ENCODE measurements at regions of chr6 and their contacts with region 1.

Region 1: GRCh38 chr6:32868257-32868788 is 14.3 kb downstream of the PSMB9 start:
- DNase-seq: peak; percentile 70
- ATAC-seq: peak; percentile 66
- H3K4me3 Mint-ChIP-seq: no peak overlapping the region
- H3K27ac Mint-ChIP-seq: no peak overlapping the region
- H3K4me1 Mint-ChIP-seq: peaks cover 35% of the 10 kb centered on the region
- H3K27me3 Mint-ChIP-seq: no peaks in the 10 kb centered on the region
- CTCF ChIP-seq: peak; percentile 42

Region 2: GRCh38 chr6:31862344-31863227 is 1005.7 kb before region 1 on chr6 and contains the start of gene NEU1:
- CTCF ChIA-PET with region 1: no interaction called
- POLR2A ChIA-PET with region 1: no interaction called
- intact Hi-C with region 1: no loop called
- DNase-seq: peak; percentile 93
- ATAC-seq: peak; percentile 91
- H3K4me3 Mint-ChIP-seq: peak within 1 kb of the TSS; percentile 95
- H3K27ac Mint-ChIP-seq: peak within 1 kb of the TSS; percentile 93
- H3K4me1 Mint-ChIP-seq: peaks cover 21% of the 10 kb centered on the region
- H3K27me3 Mint-ChIP-seq: no peaks in the 10 kb centered on the region
- CTCF ChIP-seq: no peak
- total RNA-seq, gene NEU1: 18.3 and 19.2 TPM in 2 replicates

Region 3: DNA sequence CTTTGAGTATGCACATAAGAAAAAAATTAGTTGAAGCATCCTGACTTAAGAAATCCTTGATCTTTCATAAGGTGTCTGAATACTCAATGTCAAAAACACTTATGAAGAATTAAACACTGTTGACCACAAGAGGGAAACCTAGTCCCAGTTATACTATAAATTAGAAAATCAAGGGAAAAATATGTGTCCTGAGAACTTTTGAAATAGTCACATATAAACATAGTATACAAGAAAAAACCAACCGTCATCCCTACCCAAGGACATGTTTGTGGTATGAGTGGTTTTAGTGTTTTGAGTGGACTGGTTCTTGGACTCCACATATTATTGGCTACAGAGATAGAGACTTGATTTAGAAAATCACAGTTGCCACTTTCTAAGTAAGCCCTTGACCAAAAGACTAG is 436.3 kb before region 1 on chr6:
- CTCF ChIA-PET with region 1: interaction called, 6 read pairs
- POLR2A ChIA-PET with region 1: interaction called, 3 read pairs
- intact Hi-C with region 1: loop called (anchors 5 kb)
- DNase-seq: no peak
- ATAC-seq: peak; percentile 43
- H3K4me3 Mint-ChIP-seq: no peak overlapping the region
- H3K27ac Mint-ChIP-seq: peak overlapping the region; percentile 24
- H3K4me1 Mint-ChIP-seq: peaks cover 33% of the 10 kb centered on the region
- H3K27me3 Mint-ChIP-seq: no peaks in the 10 kb centered on the region
- CTCF ChIP-seq: peak; percentile 65

Region 4: DNA sequence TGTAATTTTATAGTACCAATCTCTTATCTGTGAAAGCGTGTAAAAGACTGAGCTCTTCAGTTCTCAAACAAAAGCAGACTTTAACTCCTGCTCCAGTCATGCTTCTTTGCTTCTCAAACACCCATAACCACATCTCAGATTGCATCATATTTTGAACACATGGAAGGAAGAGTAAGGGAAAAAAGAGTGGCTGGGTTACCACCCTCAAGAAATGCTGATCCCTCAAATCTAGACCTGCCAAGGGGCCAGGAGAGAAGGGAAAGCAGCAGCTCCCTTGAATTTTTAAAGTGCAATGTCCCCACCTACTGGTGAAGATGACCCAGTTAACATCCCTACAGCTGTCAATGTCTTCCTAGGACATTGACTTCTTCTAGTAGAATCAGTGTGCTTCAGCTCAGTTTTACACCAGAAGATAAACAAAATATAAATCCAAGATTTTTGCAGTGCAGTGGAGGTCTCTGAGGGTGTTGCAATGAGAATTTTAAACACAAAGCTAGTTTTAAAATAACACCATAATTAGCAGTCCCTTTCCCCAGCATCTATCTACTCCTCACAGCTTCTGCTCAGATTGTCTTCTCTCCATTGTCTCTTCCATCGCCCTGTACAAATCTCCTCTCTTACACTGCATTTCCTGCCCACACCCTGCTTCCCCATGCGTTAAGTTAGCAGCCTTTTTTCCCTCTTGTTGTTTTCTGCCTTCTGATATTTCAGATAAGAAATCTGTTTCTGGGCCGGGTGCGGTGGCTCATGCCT is 82.4 kb before region 1 on chr6:
- CTCF ChIA-PET with region 1: interaction called, 38 read pairs
- POLR2A ChIA-PET with region 1: interaction called, 3 read pairs
- intact Hi-C with region 1: no loop called
- DNase-seq: no peak
- ATAC-seq: peak; percentile 88
- H3K4me3 Mint-ChIP-seq: no peak overlapping the region
- H3K27ac Mint-ChIP-seq: no peak overlapping the region
- H3K4me1 Mint-ChIP-seq: peaks cover 2% of the 10 kb centered on the region
- H3K27me3 Mint-ChIP-seq: no peaks in the 10 kb centered on the region
- CTCF ChIP-seq: no peak

Region 5: DNA sequence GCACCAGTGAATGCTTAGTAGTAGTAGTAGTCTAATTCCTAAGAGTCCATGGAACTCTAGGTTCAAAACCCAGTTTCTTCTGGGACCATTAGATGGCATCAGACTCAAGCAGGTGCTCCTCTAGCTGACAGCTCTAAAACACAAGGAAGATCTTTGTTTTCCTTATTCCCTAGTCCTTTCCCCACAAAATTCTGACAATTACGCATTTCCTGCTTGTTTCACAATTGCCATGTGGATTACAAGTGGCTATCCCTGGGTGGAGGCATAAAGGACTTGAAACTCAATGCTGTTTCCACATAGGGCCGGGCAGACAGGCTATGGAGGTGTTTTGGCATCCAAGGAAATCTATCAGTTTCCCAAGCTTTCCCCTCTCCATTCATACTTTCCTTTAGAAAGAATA is 42.4 kb before region 1 on chr6:
- CTCF ChIA-PET with region 1: interaction called, 24 read pairs
- POLR2A ChIA-PET with region 1: interaction called, 5 read pairs
- intact Hi-C with region 1: no loop called
- DNase-seq: no peak
- ATAC-seq: no peak
- H3K4me3 Mint-ChIP-seq: no peak overlapping the region
- H3K27ac Mint-ChIP-seq: no peak overlapping the region
- H3K4me1 Mint-ChIP-seq: peaks cover 17% of the 10 kb centered on the region
- H3K27me3 Mint-ChIP-seq: no peaks in the 10 kb centered on the region
- CTCF ChIP-seq: no peak

Region 6: GRCh38 chr6:32853541-32854375 is 14.6 kb before region 1 on chr6 and contains the starts of genes PSMB9 and TAP1:
- CTCF ChIA-PET with region 1: interaction called, 81 read pairs
- POLR2A ChIA-PET with region 1: interaction called, 98 read pairs
- intact Hi-C with region 1: loop called (anchors 1 kb)
- DNase-seq: peak; percentile 91
- ATAC-seq: peak; percentile 80
- H3K4me3 Mint-ChIP-seq: peak within 1 kb of the TSS; percentile 99
- H3K27ac Mint-ChIP-seq: peak within 1 kb of the TSS; percentile 98
- H3K4me1 Mint-ChIP-seq: peaks cover 77% of the 10 kb centered on the region
- H3K27me3 Mint-ChIP-seq: no peaks in the 10 kb centered on the region
- CTCF ChIP-seq: peak; percentile 20
- total RNA-seq, gene PSMB9: 198 and 223 TPM in 2 replicates
- total RNA-seq, gene TAP1: 148 and 151 TPM in 2 replicates

Region 7: DNA sequence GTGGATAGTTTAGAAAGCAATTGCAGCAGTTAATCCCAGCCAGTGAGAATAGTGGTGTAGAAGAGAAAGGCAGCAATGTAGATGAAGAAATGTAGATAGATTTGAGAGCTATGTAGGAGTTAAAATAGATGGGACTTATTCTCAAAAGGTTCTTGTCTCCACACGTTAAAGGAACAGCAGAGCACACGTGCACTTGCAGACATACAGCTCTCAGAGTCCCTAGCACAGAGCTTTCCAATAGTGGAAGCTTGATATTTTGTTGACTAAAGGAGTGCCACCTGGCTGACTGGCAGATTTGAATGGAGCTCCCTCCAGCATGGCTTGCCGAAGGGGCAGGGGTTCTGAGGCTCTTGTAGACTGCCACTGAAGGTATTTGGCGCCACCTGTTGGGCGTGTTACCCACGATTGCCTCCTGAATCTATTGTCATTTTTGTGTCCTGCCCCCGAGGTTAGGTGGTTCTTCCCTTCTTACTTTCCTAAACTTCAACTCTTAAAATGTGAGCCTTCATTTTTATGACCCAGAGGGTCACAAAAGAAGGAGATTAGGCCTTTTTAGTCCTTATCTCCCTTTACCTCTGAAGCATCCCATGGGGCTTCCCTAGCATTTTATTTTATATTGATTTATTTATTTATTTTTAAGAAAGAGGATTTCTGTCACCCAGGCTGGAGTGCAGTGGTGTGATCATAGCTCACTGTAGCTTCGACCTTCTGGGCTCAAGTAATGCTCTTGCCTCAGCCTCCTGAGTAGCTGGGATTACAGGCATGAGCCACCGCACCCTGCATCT is 116.5 kb after region 1 on chr6:
- CTCF ChIA-PET with region 1: interaction called, 39 read pairs
- POLR2A ChIA-PET with region 1: interaction called, 6 read pairs
- intact Hi-C with region 1: no loop called
- DNase-seq: peak; percentile 74
- ATAC-seq: peak; percentile 90
- H3K4me3 Mint-ChIP-seq: no peak overlapping the region
- H3K27ac Mint-ChIP-seq: peak overlapping the region; percentile 73
- H3K4me1 Mint-ChIP-seq: peaks cover 32% of the 10 kb centered on the region
- H3K27me3 Mint-ChIP-seq: no peaks in the 10 kb centered on the region
- CTCF ChIP-seq: no peak

Region 8: GRCh38 chr6:33112148-33112547 is 243.8 kb after region 1 on chr6:
- CTCF ChIA-PET with region 1: no interaction called
- POLR2A ChIA-PET with region 1: no interaction called
- intact Hi-C with region 1: no loop called
- DNase-seq: no peak
- ATAC-seq: peak; percentile 94
- H3K4me3 Mint-ChIP-seq: peak overlapping the region; percentile 76
- H3K27ac Mint-ChIP-seq: peak overlapping the region; percentile 73
- H3K4me1 Mint-ChIP-seq: peaks cover 53% of the 10 kb centered on the region
- H3K27me3 Mint-ChIP-seq: peaks cover 3% of the 10 kb centered on the region
- CTCF ChIP-seq: no peak

Measured in activated B cell treated with CpG ODN at 0.5 μM for 24 hours (primary cell).